CD4-positive, alpha-beta memory T cell (primary cell): ENCODE measurements at regions of chr6 and their contacts with region 1.

Region 1: GRCh38 chr6:157756708-157757429 is 66.2 kb upstream of the SNX9 start:
- DNase-seq: peak; percentile 74 to 80 (median 76)
- H3K4me3 ChIP-seq: no peak overlapping the region
- H3K4me3 Mint-ChIP-seq: peak overlapping the region in 5 of 8 donors; percentile 6 to 64 (median 39)
- H3K27ac ChIP-seq: no peak overlapping the region
- H3K27ac Mint-ChIP-seq: peak overlapping the region; percentile 11 to 88 (median 73)
- H3K4me1 ChIP-seq: peaks cover 43% of the 10 kb centered on the region
- H3K4me1 Mint-ChIP-seq: peaks cover 28 to 74% (median 40%) of the 10 kb centered on the region in 4 donors
- H3K27me3 ChIP-seq: peaks cover 5% of the 10 kb centered on the region
- H3K27me3 Mint-ChIP-seq: peaks cover 6 to 7% of the 10 kb centered on the region in 2 donors

Region 2: DNA sequence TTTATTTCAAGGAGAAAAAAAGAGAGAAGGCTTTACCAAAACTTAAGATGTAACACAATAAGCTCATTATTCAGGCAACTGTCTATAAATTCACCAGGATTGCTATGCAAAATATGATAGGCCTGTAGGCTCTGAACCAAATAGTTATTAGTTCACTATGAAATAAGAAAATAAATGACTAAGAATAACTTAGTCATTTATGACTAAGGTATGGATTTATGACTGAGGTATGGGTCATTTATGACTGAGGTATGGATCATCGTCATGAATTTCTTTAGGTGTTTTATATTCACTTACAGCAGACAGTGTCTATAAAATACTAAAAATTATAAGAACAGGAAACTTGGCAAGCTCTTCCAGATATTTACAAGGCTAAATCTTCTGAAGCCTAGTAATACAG is 14.1 kb after region 1 on chr6:
- CTCF ChIA-PET with region 1: interaction called, 29 read pairs
- POLR2A ChIA-PET with region 1: interaction called, 3 read pairs
- intact Hi-C with region 1: no loop called
- DNase-seq: no peak
- H3K4me3 ChIP-seq: no peak overlapping the region
- H3K4me3 Mint-ChIP-seq: no peak overlapping the region
- H3K27ac ChIP-seq: no peak overlapping the region
- H3K27ac Mint-ChIP-seq: no peak overlapping the region
- H3K4me1 ChIP-seq: peaks cover 20% of the 10 kb centered on the region
- H3K4me1 Mint-ChIP-seq: peaks cover 16 to 35% (median 21%) of the 10 kb centered on the region in 4 donors
- H3K27me3 ChIP-seq: no peaks in the 10 kb centered on the region
- H3K27me3 Mint-ChIP-seq: peaks cover 0 to 5% of the 10 kb centered on the region in 2 donors

Region 3: GRCh38 chr6:157867155-157867559 is 110.3 kb after region 1 on chr6:
- CTCF ChIA-PET with region 1: interaction called, 314 read pairs
- POLR2A ChIA-PET with region 1: no interaction called
- intact Hi-C with region 1: no loop called
- DNase-seq: no peak
- H3K4me3 ChIP-seq: no peak overlapping the region
- H3K4me3 Mint-ChIP-seq: peak overlapping the region in 1 of 8 donors; percentile 5
- H3K27ac ChIP-seq: no peak overlapping the region
- H3K27ac Mint-ChIP-seq: peak overlapping the region in 6 of 7 donors; percentile 19 to 76 (median 59)
- H3K4me1 ChIP-seq: peaks cover 23% of the 10 kb centered on the region
- H3K4me1 Mint-ChIP-seq: peaks cover 9 to 28% (median 16%) of the 10 kb centered on the region in 4 donors
- H3K27me3 ChIP-seq: no peaks in the 10 kb centered on the region
- H3K27me3 Mint-ChIP-seq: peaks cover 0 to 1% of the 10 kb centered on the region in 2 donors

Region 4: DNA sequence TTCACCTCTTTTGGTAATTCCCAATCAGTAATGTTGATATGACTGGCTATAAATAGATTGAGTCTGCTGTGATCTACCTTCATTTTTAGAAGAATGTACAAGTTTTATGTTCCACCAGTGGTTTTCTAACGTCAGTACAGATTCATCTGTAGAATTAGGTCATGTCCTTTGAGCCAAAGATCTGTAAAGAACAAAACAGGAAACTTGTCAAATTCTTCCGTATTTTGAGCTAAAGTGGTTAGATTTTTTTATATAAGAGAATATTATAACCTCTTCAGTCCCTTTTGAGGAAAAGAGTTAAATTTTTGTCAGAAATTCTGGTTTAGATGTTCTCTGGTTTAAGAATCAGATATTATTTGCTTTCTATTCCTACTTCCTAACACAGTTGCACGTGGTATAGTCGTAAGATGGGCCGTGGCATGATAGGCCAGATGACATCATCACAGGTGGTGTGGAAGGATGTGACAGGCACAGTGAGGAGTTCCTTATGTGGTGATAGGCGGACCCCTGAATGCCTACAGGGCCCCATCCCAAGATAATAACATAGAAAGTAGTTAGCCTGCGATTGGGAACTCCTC is 128.4 kb after region 1 on chr6:
- CTCF ChIA-PET with region 1: interaction called, 314 read pairs
- POLR2A ChIA-PET with region 1: interaction called, 21 read pairs
- intact Hi-C with region 1: no loop called
- DNase-seq: peak; percentile 73 to 88 (median 86)
- H3K4me3 ChIP-seq: peak overlapping the region in 1 of 2 donors; percentile 21
- H3K4me3 Mint-ChIP-seq: peak overlapping the region in 7 of 8 donors; percentile 7 to 78 (median 42)
- H3K27ac ChIP-seq: peak overlapping the region; percentile 55
- H3K27ac Mint-ChIP-seq: peak overlapping the region; percentile 90 to 98 (median 96)
- H3K4me1 ChIP-seq: peaks cover 35% of the 10 kb centered on the region
- H3K4me1 Mint-ChIP-seq: peaks cover 33 to 74% (median 44%) of the 10 kb centered on the region in 4 donors
- H3K27me3 ChIP-seq: no peaks in the 10 kb centered on the region
- H3K27me3 Mint-ChIP-seq: no peaks in the 10 kb centered on the region

Region 5: GRCh38 chr6:157981395-157982296 is 224.8 kb after region 1 on chr6 and contains the start of gene SYNJ2:
- CTCF ChIA-PET with region 1: interaction called, 12 read pairs
- POLR2A ChIA-PET with region 1: no interaction called
- intact Hi-C with region 1: loop called (anchors 5 kb)
- DNase-seq: peak; percentile 86 to 89 (median 87)
- H3K4me3 ChIP-seq: peak within 1 kb of the TSS; percentile 76 to 88
- H3K4me3 Mint-ChIP-seq: peak within 1 kb of the TSS; percentile 88 to 94 (median 92)
- H3K27ac ChIP-seq: peak within 1 kb of the TSS; percentile 71
- H3K27ac Mint-ChIP-seq: peak within 1 kb of the TSS; percentile 85 to 93 (median 90)
- H3K4me1 ChIP-seq: peaks cover 44% of the 10 kb centered on the region
- H3K4me1 Mint-ChIP-seq: peaks cover 24 to 53% (median 39%) of the 10 kb centered on the region in 4 donors
- H3K27me3 ChIP-seq: no peaks in the 10 kb centered on the region
- H3K27me3 Mint-ChIP-seq: no peaks in the 10 kb centered on the region
- total RNA-seq, gene SYNJ2: 17.2 to 17.4 TPM

Region 6: GRCh38 chr6:158439255-158439654 is 682.4 kb after region 1 on chr6:
- CTCF ChIA-PET with region 1: no interaction called
- POLR2A ChIA-PET with region 1: no interaction called
- intact Hi-C with region 1: no loop called
- DNase-seq: no peak
- H3K4me3 ChIP-seq: no peak overlapping the region
- H3K4me3 Mint-ChIP-seq: no peak overlapping the region
- H3K27ac ChIP-seq: no peak overlapping the region
- H3K27ac Mint-ChIP-seq: no peak overlapping the region
- H3K4me1 ChIP-seq: no peaks in the 10 kb centered on the region
- H3K4me1 Mint-ChIP-seq: peaks cover 0 to 3% (median under 1%) of the 10 kb centered on the region in 4 donors
- H3K27me3 ChIP-seq: no peaks in the 10 kb centered on the region
- H3K27me3 Mint-ChIP-seq: no peaks in the 10 kb centered on the region